Adrenal gland (tissue), 19 donors: ENCODE measurements at regions of chr4 and their contacts with region 1.

Region 1: DNA sequence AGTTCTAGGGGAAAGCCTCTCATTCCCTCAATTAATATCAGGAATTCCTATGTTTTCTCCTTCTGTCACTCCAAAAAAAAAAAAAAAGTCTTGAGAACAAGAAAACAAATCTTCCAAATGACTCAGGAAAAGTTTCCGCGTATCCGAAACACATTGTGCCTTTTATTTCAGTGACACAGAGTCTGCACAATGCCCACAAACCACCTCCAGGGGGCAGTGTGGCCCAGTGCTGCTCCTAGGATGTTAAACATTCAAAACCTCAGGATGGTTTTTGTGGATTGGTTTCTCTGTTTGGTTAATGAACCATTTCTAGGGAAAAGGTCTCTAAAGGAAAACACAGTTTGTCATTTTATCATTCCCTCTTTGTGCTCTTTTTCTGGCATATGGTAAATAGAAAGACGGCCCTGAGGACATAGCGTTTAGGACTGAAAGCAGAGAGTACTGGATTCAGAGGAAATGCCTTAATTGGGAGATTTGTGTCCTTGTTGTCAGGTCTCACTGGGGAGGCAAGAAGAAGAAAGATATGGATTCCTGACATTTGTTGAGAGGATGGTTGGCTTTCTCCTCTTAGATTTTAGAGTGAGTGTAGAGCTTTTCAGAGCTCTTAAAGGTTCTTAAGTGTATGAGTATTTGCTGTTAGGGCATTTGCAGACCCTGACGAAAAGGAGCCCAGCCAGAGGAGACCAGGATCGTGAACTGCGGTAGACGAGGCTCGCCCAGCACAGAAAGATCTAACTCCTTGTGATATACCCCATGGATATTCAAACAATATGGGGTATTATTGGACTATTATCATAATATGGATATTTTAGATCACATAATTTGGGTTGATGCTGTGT is 65.7 kb upstream of the MAP9 start:
- DNase-seq: peak; percentile 57 to 93 (median 75)
- H3K4me3 ChIP-seq: no peak overlapping the region
- H3K27ac ChIP-seq: no peak overlapping the region
- H3K4me1 ChIP-seq: no peaks in the 10 kb centered on the region
- H3K27me3 ChIP-seq: no peaks in the 10 kb centered on the region
- CTCF ChIP-seq: peak; percentile 63 to 94 (median 84)
- POLR2A ChIP-seq: no peak

Region 2: GRCh38 chr4:154838694-154839093 is 603.8 kb before region 1 on chr4:
- intact Hi-C with region 1: no loop called
- DNase-seq: no peak
- H3K4me3 ChIP-seq: no peak overlapping the region
- H3K27ac ChIP-seq: no peak overlapping the region
- H3K4me1 ChIP-seq: no peaks in the 10 kb centered on the region
- H3K27me3 ChIP-seq: no peaks in the 10 kb centered on the region
- CTCF ChIP-seq: no peak
- POLR2A ChIP-seq: no peak

Region 3: DNA sequence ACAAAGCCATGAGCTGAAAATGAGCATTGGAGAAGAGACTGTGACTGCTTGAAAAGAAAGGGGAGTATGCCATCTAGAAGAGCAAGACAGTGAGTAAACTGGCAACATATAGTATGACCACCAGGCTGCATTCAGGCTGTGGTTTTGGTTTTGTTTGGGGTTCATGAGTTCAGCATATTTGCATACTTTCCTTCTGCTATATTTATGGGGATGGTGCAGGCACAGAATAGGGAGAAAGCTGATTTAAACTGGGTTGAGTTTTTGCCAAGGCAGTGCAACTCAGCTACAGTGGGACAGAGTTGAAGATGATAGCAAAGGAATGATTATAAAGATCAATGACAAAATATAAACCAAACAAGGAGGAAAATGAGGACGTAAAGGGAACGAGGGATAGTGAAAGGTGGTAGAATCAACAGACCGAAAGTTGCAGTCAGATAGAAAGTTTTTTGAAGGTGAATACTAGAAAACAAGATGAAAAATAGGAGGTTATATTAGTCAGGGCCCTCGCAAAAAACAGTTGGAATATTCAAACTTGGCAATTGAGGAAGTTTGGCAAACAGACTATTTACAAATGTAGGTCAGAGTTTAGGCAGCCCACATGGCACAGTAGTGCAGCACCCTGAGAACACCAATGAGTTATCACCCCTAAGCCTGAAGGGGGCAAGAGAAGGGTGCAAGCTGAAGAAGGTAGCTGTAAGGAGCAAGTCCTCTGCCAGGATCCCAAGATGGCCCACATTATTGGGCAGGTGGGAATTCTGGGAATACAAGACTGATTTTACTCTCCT is 49.0 kb after region 1 on chr4:
- intact Hi-C with region 1: no loop called
- DNase-seq: no peak
- H3K4me3 ChIP-seq: no peak overlapping the region
- H3K27ac ChIP-seq: no peak overlapping the region
- H3K4me1 ChIP-seq: no peaks in the 10 kb centered on the region
- H3K27me3 ChIP-seq: no peaks in the 10 kb centered on the region
- CTCF ChIP-seq: no peak
- POLR2A ChIP-seq: no peak

Region 4: GRCh38 chr4:155787113-155787710 is 344.7 kb after region 1 on chr4:
- intact Hi-C with region 1: loop called (anchors 5 to 10 kb)
- DNase-seq: peak in 1 of 7 donors; percentile 5
- H3K4me3 ChIP-seq: no peak overlapping the region
- H3K27ac ChIP-seq: no peak overlapping the region
- H3K4me1 ChIP-seq: no peaks in the 10 kb centered on the region
- H3K27me3 ChIP-seq: no peaks in the 10 kb centered on the region
- CTCF ChIP-seq: peak; percentile 19 to 73 (median 64)
- POLR2A ChIP-seq: no peak